IMR-90 (cell line): ENCODE measurements at regions of chr11 and their contacts with region 1.

Region 1: GRCh38 chr11:116885951-116886655 is 48.7 kb upstream of the APOA1 start:
- DNase-seq: peak; percentile 85
- ATAC-seq: peak; percentile 53
- H3K4me3 ChIP-seq: no peak overlapping the region
- H3K27ac ChIP-seq: no peak overlapping the region
- H3K4me1 ChIP-seq: peaks cover 15% of the 10 kb centered on the region
- H3K27me3 ChIP-seq: no peaks in the 10 kb centered on the region
- CTCF ChIP-seq: no peak
- POLR2A ChIP-seq: no peak
- RAD21 ChIP-seq: no peak

Region 2: GRCh38 chr11:116927163-116927974 is 41.3 kb after region 1 on chr11:
- CTCF ChIA-PET with region 1: no interaction called
- POLR2A ChIA-PET with region 1: no interaction called
- dilution Hi-C with region 1: no loop called
- in situ Hi-C with region 1: no loop called
- intact Hi-C with region 1: no loop called
- DNase-seq: no peak
- ATAC-seq: no peak
- H3K4me3 ChIP-seq: no peak overlapping the region
- H3K27ac ChIP-seq: no peak overlapping the region
- H3K4me1 ChIP-seq: peaks cover 13% of the 10 kb centered on the region
- H3K27me3 ChIP-seq: no peaks in the 10 kb centered on the region
- CTCF ChIP-seq: 0 out of 2 replicates have a peak, but pooled peaks have one; percentile 15
- POLR2A ChIP-seq: no peak
- RAD21 ChIP-seq: peak; percentile 16; the same call in 1 of the 2 replicates

Region 3: GRCh38 chr11:116980136-116980793 is 94.2 kb after region 1 on chr11:
- CTCF ChIA-PET with region 1: no interaction called
- POLR2A ChIA-PET with region 1: no interaction called
- dilution Hi-C with region 1: no loop called
- in situ Hi-C with region 1: no loop called
- intact Hi-C with region 1: loop called (anchors 5 kb)
- DNase-seq: no peak
- ATAC-seq: no peak
- H3K4me3 ChIP-seq: no peak overlapping the region
- H3K27ac ChIP-seq: no peak overlapping the region
- H3K4me1 ChIP-seq: peaks cover 8% of the 10 kb centered on the region
- H3K27me3 ChIP-seq: no peaks in the 10 kb centered on the region
- CTCF ChIP-seq: no peak
- POLR2A ChIP-seq: no peak
- RAD21 ChIP-seq: no peak